ENCODE measurements at regions of chr6 and their contacts with region 1.

Region 1: DNA sequence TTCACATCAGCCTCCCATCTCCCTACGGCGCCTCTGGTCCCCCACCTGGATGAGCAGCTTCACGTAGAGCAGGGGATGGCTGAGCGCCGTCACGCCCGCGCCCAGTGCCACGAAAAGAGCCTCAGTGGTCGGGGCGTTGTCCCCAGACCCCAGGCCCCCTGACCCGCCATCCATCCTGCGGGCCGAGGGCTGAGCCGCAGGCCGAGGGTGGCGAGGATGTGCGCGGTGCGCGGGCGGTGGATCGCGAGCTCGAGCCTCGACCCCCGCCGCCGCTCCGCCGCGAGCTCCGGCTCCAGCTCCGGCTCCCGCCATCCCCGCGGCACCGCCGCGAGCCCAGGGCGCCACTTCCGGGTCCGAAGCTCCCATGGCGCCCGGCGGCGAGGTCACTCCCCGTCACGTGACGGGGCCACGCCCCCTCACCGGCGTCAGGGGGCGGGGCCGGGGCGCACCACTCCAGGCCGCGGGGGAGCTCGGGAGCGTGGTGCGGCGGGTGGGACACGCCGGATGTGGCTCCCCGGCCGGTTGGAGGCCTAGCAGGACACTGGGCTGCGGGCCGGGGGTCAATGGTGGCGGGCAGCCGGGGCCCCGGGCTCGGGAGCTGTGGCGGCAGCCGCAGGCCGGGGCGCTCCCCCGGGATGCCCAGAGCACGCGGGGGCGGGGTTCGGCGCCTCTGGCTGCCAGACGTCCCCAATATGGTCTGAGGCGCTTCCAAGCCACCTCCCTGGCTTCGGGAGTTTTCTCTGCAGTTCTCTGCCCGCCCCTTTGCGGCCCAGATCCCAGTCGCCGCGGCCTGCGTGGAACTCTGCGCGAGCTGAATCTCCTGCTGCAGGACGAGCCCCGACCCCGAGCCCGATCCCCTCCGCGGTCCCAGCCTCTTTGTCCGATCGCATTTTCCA is at the start of gene MTCH1:
- DNase-seq: peak; percentile 89
- H3K4me3 Mint-ChIP-seq: peak within 1 kb of the TSS; percentile 99
- H3K27ac Mint-ChIP-seq: peak within 1 kb of the TSS; percentile 92
- H3K4me1 Mint-ChIP-seq: peaks cover 21% of the 10 kb centered on the region
- H3K27me3 Mint-ChIP-seq: peaks cover 4% of the 10 kb centered on the region
- total RNA-seq, gene MTCH1: 131 TPM

Region 2: GRCh38 chr6:36827261-36828079 is 158.6 kb before region 1 on chr6:
- CTCF ChIA-PET with region 1: no interaction called
- POLR2A ChIA-PET with region 1: no interaction called
- DNase-seq: peak; percentile 45
- H3K4me3 Mint-ChIP-seq: no peak overlapping the region
- H3K27ac Mint-ChIP-seq: no peak overlapping the region
- H3K4me1 Mint-ChIP-seq: peaks cover 10% of the 10 kb centered on the region
- H3K27me3 Mint-ChIP-seq: peaks cover 8% of the 10 kb centered on the region

Region 3: DNA sequence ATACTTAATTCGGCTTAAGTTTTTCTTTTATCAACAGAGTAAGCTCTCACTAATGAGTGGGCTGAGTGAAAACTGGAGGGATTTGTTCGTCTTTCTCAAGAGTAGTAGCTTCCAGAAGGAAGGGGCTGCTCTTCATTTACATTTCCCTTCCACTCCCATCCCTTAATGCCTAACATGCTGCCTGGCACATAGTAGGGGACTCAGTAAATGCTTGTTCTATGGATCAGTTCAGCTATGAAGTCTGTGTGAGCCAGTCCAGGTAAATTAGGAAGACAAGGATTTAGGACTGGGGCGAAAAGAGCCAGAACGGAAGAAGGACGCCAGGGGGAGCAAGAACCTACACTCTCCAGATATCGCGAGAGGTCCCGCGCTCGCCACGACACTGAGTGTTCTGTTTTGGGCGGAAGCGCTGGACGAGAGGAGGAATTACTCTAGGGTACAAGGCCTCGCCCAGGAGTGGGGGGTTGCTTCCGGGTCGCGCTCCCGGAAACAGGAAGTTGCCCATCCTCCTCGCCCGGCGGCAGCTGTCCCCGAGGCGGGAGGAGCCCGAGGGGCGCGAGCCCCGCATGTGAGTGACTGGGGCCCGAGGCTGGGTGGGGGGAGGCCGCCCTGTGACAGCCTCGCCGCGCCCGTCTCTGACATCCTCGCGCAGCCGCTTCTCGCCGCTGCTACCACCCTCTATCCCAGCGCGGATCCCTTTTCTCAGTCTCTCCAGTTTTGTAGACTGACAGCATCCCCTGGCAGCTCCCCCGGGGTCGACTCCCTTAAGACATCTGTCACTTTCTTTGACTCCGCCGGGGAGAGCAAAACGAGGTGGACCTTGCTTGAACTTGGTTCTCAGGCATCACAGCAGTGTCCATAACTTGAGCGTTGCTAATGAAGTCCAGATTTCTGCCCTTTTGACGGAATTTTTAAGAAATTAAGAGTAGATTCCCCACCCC is 100.3 kb before region 1 on chr6 and contains the start of gene C6orf89:
- CTCF ChIA-PET with region 1: interaction called, 9 read pairs
- POLR2A ChIA-PET with region 1: interaction called, 14 read pairs
- DNase-seq: peak; percentile 98
- H3K4me3 Mint-ChIP-seq: peak within 1 kb of the TSS; percentile 89
- H3K27ac Mint-ChIP-seq: peak within 1 kb of the TSS; percentile 76
- H3K4me1 Mint-ChIP-seq: peaks cover 36% of the 10 kb centered on the region
- H3K27me3 Mint-ChIP-seq: no peaks in the 10 kb centered on the region
- total RNA-seq, gene C6orf89: 51.8 to 53.8 TPM

Region 4: GRCh38 chr6:36912586-36912985 is 73.5 kb before region 1 on chr6:
- CTCF ChIA-PET with region 1: interaction called, 8 read pairs
- POLR2A ChIA-PET with region 1: interaction called, 12 read pairs
- DNase-seq: peak; percentile 80
- H3K4me3 Mint-ChIP-seq: peak overlapping the region; percentile 68
- H3K27ac Mint-ChIP-seq: peak overlapping the region; percentile 90
- H3K4me1 Mint-ChIP-seq: peaks cover 60% of the 10 kb centered on the region
- H3K27me3 Mint-ChIP-seq: no peaks in the 10 kb centered on the region

Region 5: DNA sequence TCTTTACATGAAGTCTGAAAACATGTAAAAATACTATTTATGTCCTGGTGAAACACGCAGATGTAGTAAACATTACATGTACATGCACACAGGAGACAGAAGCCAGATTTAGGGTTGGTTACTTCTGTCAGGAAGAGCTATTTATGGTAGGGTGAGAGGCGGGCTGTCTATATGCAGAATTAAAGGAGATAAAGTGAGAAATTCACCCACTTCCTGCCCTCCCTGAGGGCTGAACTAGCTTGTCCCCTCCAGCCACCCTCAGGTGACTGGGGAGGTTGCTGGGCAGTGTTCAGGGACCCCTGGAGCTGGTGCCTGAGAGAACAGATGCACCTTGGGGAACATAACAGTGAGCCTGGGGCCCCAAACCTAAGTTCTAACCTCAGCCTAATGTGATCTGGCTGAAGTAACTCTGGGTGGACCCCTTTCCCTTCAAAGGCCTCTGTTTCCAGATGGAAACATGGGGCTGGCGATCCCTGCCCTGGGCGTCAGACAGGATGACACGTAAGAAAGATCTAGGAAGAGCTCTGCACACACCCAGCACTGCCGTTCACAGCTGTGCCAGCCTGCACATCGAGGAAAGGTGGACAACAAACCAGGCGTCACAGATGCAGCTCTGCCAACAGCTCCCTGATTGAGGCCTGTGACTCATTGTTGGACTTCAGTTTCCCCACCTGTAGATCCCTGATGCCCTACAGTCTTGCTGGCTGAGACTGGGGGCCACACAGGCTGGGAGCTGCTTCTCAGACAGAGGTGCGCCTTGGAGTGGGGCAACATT is 30.2 kb before region 1 on chr6:
- CTCF ChIA-PET with region 1: no interaction called
- POLR2A ChIA-PET with region 1: interaction called, 18 read pairs
- DNase-seq: no peak
- H3K4me3 Mint-ChIP-seq: peak overlapping the region; percentile 62
- H3K27ac Mint-ChIP-seq: no peak overlapping the region
- H3K4me1 Mint-ChIP-seq: peaks cover 53% of the 10 kb centered on the region
- H3K27me3 Mint-ChIP-seq: peaks cover 6% of the 10 kb centered on the region

Region 6: GRCh38 chr6:36962874-36963273 is 23.2 kb before region 1 on chr6:
- CTCF ChIA-PET with region 1: no interaction called
- POLR2A ChIA-PET with region 1: interaction called, 10 read pairs
- DNase-seq: peak; percentile 86
- H3K4me3 Mint-ChIP-seq: no peak overlapping the region
- H3K27ac Mint-ChIP-seq: peak overlapping the region; percentile 55
- H3K4me1 Mint-ChIP-seq: peaks cover 49% of the 10 kb centered on the region
- H3K27me3 Mint-ChIP-seq: no peaks in the 10 kb centered on the region

Region 7: DNA sequence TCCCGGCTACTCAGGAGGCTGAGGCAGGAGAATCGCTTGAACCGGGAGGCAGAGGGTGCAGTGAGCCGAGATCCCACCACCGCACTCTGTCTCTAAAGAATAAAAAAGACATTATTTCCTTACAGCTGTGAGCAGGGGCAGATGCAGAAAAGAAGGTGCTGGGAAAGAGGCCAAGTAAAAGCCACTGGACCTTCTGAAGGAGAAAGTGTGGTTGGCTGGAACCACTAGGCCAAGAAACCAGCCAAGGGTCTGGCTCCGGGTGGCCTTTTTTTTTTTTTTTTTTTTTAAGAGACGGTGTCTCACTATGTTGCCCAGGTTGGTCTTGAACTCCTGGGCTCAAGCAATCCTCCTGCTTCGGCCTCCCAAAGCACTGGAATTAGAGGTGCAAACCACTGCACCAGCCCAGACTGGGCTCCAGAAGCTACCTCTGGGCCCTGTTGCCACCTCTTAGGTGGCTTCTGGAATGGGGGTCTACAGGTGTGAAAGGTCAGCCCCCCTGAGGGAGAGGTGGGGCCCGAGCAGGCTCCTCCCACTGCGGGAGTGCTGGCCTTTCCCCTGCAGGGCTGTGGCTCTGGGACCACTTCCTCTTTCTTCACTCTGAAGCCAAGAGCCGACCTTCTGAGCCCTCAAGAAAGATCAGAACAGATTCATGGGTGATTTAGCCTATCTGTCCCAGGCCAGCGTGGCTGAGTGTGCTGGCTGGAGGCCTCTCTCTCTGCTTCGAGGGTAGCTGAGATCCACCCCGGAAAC is 19.2 kb after region 1 on chr6 and contains the start of gene FGD2:
- CTCF ChIA-PET with region 1: interaction called, 3 read pairs
- POLR2A ChIA-PET with region 1: interaction called, 15 read pairs
- DNase-seq: no peak
- H3K4me3 Mint-ChIP-seq: peak within 1 kb of the TSS; percentile 62
- H3K27ac Mint-ChIP-seq: peak within 1 kb of the TSS; percentile 31
- H3K4me1 Mint-ChIP-seq: peaks cover 29% of the 10 kb centered on the region
- H3K27me3 Mint-ChIP-seq: no peaks in the 10 kb centered on the region
- total RNA-seq, gene FGD2: 4.7 to 4.9 TPM